ENCODE measurements at regions of chr13 and their contacts with region 1.

Region 1: GRCh38 chr13:98927951-98928927 is 49.6 kb downstream of the DOCK9 start:
- DNase-seq: peak; percentile 12
- ATAC-seq: no peak
- H3K4me3 ChIP-seq: no peak overlapping the region
- H3K27ac ChIP-seq: no peak overlapping the region
- H3K4me1 ChIP-seq: no peaks in the 10 kb centered on the region
- H3K27me3 ChIP-seq: no peaks in the 10 kb centered on the region; a peak in 1 of 5 replicates
- CTCF ChIP-seq: no peak
- EP300 ChIP-seq: no peak
- POLR2A ChIP-seq: no peak
- RAD21 ChIP-seq: no peak

Region 2: DNA sequence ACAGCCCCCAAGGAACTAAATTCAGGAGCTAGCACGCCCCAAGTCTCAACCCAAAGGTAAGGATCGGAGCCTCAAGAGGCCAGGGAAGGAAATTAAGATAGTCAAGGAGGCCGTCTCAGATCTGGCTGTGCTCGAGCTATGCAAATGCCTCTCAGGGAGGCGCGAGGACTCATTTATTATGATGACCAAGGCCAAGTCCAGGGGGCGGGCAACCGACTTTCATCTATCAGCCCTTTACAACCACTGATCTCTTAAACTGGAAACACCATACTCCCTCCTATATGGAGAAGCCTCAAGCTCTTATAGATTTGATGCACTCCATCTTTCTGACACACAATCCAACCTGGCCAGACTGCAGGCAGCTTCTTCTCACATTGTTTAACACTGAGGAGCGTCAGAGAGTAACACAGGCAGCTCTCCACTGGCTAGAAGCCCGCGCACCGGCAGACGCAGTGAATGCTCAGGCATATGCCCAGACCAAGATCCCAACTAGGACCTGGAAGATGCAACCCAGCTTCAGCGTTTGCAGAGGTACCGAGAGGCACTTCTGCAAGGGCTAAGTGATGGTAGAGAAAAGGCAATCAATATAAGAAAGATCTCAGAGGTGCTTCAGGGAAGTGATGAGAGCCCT is 166.1 kb before region 1 on chr13:
- CTCF ChIA-PET with region 1: no interaction called
- POLR2A ChIA-PET with region 1: no interaction called
- in situ Hi-C with region 1: no loop called
- intact Hi-C with region 1: no loop called
- DNase-seq: no peak
- ATAC-seq: peak; percentile 57
- H3K4me3 ChIP-seq: peak overlapping the region; percentile 30 to 63 (median 61)
- H3K27ac ChIP-seq: no peak overlapping the region
- H3K4me1 ChIP-seq: peaks cover 20% of the 10 kb centered on the region
- H3K27me3 ChIP-seq: peaks cover 6 to 40% of the 10 kb centered on the region in 2 experiments; a peak in 4 of 5 replicates
- CTCF ChIP-seq: no peak
- EP300 ChIP-seq: no peak
- POLR2A ChIP-seq: no peak
- RAD21 ChIP-seq: no peak

Region 3: DNA sequence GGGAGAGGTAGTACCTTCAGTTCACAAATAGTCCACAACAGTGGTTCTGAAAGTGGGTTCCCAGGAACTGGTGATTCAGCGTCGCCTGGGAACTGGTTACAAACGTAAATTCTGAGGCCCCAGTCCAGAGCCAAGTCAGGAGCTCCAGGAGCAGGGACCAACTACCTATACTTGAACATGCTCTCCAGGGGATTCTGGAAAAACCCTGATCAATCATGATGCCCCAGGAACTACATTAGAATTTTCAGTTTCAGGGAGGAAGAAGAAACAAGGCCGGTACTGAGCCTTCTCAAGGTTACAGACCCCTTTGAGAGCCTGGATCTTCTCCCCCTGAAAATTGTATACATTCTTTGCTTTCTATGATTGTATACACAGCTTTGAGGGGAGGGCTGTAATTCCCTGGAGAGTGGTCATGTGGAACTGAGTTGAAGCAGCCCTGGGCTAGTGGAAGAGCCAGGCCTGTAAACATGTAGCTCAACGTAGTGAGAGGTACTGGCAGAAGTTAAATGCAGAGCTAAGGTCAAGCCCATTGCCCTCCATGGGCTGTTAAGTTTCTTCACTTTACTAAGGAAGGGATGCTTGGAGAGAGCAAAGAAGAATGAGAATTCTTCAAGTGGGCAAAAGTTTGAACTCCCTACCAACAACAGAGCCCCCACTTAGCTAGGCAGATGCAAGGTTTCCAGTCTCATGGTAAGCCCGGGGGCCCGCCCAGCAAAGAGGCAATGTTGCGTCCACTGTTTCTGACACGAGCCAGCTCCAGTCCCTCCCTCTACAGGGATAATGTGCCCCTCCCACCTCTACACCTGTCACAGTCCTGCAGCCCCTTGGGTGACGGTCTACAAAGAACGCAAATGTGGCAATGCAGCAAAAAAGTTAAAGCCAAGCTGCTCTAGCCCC is 32.6 kb after region 1 on chr13:
- CTCF ChIA-PET with region 1: no interaction called
- POLR2A ChIA-PET with region 1: no interaction called
- in situ Hi-C with region 1: no loop called
- intact Hi-C with region 1: loop called (anchors 1 kb)
- DNase-seq: no peak
- ATAC-seq: no peak
- H3K4me3 ChIP-seq: no peak overlapping the region
- H3K27ac ChIP-seq: no peak overlapping the region
- H3K4me1 ChIP-seq: peaks cover 5% of the 10 kb centered on the region; the same call in 1 of the 2 replicates
- H3K27me3 ChIP-seq: no peaks in the 10 kb centered on the region
- CTCF ChIP-seq: no peak
- EP300 ChIP-seq: no peak
- POLR2A ChIP-seq: no peak
- RAD21 ChIP-seq: no peak

Measured in HepG2 (cell line).